Mammary epithelial cell (primary cell): ENCODE measurements at regions of chr12 and their contacts with region 1.

Region 1: DNA sequence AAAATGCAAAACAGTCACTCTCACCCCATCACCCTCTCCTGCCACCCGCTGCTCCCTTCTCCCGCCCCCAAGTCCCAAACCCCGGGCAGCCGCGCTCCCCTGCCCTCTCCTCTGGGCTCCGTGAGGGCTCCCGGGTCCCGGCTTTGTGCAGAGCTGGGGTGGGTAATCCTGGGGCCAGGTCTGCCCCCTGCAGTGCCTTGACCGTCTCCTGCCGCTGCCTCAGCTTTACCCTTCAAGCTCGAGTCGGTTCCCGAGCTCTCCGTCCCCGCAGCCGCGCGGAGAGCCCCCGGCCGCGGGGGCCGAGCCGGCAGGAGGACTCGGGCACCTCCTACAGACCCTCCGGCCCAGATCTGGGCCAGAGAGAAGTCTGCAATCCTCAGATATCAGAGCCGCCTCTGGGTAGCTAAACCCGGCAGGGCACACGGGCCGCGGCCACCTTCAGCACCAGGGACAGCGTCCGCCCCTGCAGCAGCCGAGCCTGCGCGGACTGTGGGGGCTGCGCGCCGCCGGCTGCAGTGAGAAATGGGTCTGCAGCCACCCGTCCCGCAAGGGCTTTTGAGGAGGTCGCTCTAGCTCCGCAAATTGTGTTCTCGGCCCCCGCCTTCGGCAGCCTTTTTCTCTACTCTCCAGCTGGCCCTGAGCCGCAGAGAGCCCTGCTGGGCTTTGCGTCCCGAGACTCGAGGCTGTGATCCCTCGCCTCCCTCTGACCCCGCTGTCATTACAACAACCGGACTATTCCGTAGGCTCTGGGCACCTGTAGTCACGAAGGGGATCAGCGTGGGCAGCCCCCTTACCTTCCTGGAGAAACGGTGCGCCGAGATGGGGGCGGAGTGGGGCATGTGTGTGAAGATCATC is 1.2 kb downstream of the PRMT8 start:
- DNase-seq: peak; percentile 66
- H3K4me3 ChIP-seq: peak overlapping the region; percentile 64 to 85 (median 77)
- H3K27ac ChIP-seq: peak overlapping the region; percentile 95
- H3K4me1 ChIP-seq: peaks cover 40% of the 10 kb centered on the region
- H3K27me3 ChIP-seq: no peaks in the 10 kb centered on the region
- CTCF ChIP-seq: peak in 1 of 2 donors; percentile 32

Region 2: GRCh38 chr12:3313675-3314663 is 178.2 kb before region 1 on chr12:
- CTCF ChIA-PET with region 1: no interaction called
- dilution Hi-C with region 1: loop called (anchors 10 kb)
- in situ Hi-C with region 1: loop called in 1 of 2 experiments (anchors 10 kb)
- intact Hi-C with region 1: no loop called
- DNase-seq: no peak
- H3K4me3 ChIP-seq: no peak overlapping the region
- H3K27ac ChIP-seq: no peak overlapping the region
- H3K4me1 ChIP-seq: peaks cover 58% of the 10 kb centered on the region
- H3K27me3 ChIP-seq: no peaks in the 10 kb centered on the region
- CTCF ChIP-seq: peak; percentile 29 to 44

Region 3: DNA sequence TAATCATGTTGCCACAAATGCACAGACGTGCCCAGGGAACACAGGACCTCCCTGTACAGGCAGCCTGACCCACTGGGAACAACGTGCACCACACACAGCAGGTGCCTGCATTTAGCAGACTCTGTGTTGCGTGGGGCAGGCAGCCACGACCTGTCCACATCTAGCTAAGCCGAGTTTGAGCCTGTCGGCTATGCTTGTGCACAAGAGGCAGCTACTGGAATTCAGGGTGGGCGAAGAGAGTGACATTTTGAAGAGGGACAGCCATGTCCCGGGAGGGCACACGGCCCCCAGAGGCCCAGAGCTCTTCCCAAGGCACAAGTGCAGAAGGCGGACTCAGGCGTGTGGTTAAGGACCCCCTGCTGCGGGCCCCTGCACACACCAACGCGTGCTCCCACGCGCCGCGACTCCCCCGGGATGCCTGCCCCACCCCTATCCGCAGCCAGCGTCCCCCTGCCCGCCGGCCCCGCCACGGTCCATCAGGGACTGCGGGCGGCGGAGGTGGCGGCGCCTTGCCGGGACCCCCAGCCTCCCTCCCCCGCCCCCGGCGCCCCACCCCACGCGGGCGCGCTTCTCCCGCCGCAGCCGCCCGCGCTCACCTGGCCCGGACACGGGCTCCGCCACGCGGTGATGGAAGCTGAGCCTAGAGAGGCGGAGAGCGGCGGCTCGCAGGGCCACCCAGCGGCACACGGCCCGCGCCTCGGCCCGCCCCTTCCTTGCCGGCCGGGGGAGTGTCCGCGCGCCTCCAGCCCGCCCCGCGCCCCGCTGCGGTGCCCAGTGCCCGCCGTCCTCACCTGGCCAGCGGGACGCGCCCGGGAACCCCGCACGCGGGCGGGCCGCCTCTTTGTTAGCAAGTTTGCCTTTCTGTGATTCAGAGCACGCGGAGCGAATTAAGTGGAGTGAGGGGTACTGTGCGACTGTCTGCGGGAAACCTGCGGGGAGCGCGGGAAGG is 126.4 kb before region 1 on chr12:
- CTCF ChIA-PET with region 1: no interaction called
- dilution Hi-C with region 1: no loop called
- in situ Hi-C with region 1: no loop called
- intact Hi-C with region 1: loop called (anchors 10 kb)
- DNase-seq: peak; percentile 53
- H3K4me3 ChIP-seq: peak overlapping the region; percentile 43 to 71 (median 67)
- H3K27ac ChIP-seq: no peak overlapping the region
- H3K4me1 ChIP-seq: peaks cover 10% of the 10 kb centered on the region
- H3K27me3 ChIP-seq: no peaks in the 10 kb centered on the region
- CTCF ChIP-seq: peak in 1 of 2 donors; percentile 7

Region 4: DNA sequence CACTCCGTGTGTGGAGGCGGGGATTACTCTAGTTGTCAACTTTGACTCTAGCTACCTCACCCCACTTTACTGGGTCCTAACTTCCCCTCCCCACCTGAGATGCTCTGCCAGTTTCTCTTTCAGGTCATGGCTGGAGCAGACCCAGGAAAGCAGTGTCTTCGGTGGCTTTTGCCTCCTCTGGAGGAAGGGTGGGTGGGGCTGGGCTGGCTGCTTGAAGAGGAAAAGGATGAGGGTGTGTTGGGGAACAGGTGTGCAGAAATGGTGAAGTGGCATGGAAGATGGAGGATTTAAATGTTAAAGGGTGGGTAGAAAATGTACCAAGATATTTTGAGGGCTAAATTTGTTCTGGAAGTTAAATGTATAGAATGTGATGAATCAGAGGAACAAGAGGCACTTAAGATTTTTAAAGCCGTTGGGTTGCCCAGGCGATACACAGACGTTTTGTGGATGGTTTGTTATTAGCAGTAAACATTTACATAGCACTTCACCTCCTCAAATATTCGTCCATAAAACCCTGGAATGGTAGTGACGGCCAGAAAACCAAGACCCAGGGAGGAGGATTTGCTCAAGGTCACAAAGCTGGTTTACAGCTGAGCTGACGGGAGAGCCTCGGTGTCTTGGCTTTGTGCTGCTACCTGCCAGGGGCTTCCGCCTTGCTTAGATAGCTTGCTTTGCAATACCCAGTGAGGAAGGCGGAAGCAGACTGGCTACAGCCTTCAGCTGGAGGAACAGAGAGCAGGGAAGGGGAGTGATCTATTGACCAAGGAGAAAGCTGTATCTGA is 73.4 kb before region 1 on chr12:
- CTCF ChIA-PET with region 1: no interaction called
- dilution Hi-C with region 1: no loop called
- in situ Hi-C with region 1: no loop called
- intact Hi-C with region 1: loop called (anchors 10 kb)
- DNase-seq: no peak
- H3K4me3 ChIP-seq: no peak overlapping the region
- H3K27ac ChIP-seq: no peak overlapping the region
- H3K4me1 ChIP-seq: no peaks in the 10 kb centered on the region
- H3K27me3 ChIP-seq: no peaks in the 10 kb centered on the region
- CTCF ChIP-seq: no peak

Region 5: GRCh38 chr12:3732902-3733301 is 240.7 kb after region 1 on chr12:
- CTCF ChIA-PET with region 1: no interaction called
- dilution Hi-C with region 1: no loop called
- in situ Hi-C with region 1: no loop called
- intact Hi-C with region 1: no loop called
- DNase-seq: no peak
- H3K4me3 ChIP-seq: no peak overlapping the region
- H3K27ac ChIP-seq: no peak overlapping the region
- H3K4me1 ChIP-seq: no peaks in the 10 kb centered on the region
- H3K27me3 ChIP-seq: peaks cover 7% of the 10 kb centered on the region
- CTCF ChIP-seq: no peak